Panc1 (cell line): ENCODE measurements at regions of chr17 and their contacts with region 1.

Region 1: DNA sequence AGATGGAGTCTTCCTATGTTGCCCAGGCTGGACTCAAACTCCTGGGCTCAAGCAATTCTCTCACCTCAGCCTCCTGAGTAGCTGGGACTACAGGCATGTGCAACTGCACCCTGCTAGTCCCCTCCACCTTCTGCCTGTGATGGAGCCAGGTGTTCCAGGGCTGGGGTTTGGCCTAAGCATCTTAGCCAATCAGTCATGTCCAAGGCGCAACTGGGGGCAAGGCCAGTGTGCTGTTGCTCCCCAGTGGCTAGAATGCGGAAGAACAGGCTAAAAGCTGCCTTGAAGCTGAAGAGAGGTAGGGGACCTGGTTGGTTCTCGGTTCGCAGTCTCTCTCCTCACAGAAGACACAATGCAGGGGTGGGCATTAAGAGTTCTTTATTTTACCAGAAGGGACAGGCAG is 18.6 kb downstream of the FLOT2 start:
- DNase-seq: no peak
- ATAC-seq: peak; percentile 86
- H3K4me3 ChIP-seq: no peak overlapping the region
- H3K27ac ChIP-seq: no peak overlapping the region
- H3K4me1 ChIP-seq: no peaks in the 10 kb centered on the region
- H3K27me3 ChIP-seq: no peaks in the 10 kb centered on the region
- CTCF ChIP-seq: no peak

Region 2: DNA sequence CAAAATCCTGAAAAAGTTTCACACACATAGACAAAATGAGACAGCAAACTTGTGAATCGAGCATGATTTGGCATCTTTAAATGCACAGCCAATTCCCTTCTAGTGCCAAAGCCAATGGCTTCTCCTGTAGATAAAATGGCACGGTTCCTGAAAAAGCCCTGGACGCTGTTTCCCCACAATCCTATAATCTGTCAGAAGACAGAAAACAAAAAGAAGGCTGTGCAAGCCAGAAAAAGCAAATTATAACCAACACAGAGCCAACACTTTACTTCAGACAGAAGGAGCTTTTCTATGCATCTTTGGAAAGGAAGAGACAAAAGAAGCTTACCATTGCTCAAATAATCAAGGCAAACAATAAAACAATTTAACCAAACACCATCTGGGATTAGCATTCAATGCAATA is 60.2 kb before region 1 on chr17:
- CTCF ChIA-PET with region 1: no interaction called
- POLR2A ChIA-PET with region 1: no interaction called
- in situ Hi-C with region 1: no loop called
- intact Hi-C with region 1: no loop called
- DNase-seq: no peak
- ATAC-seq: no peak
- H3K4me3 ChIP-seq: no peak overlapping the region
- H3K27ac ChIP-seq: no peak overlapping the region
- H3K4me1 ChIP-seq: peaks cover 5% of the 10 kb centered on the region; the same call in 1 of the 2 replicates
- H3K27me3 ChIP-seq: no peaks in the 10 kb centered on the region
- CTCF ChIP-seq: no peak

Region 3: GRCh38 chr17:28896884-28897768 is 18.1 kb after region 1 on chr17 and contains the start of gene FLOT2:
- CTCF ChIA-PET with region 1: interaction called, 5 read pairs
- POLR2A ChIA-PET with region 1: interaction called, 20 read pairs
- in situ Hi-C with region 1: no loop called
- intact Hi-C with region 1: no loop called
- DNase-seq: no peak
- ATAC-seq: peak; percentile 83
- H3K4me3 ChIP-seq: peak within 1 kb of the TSS; percentile 77 to 89
- H3K27ac ChIP-seq: peak within 1 kb of the TSS; percentile 83
- H3K4me1 ChIP-seq: peaks cover 18% of the 10 kb centered on the region
- H3K27me3 ChIP-seq: no peaks in the 10 kb centered on the region
- CTCF ChIP-seq: peak; percentile 54; the same call in 1 of the 2 replicates
- total RNA-seq, gene FLOT2: 110 TPM

Region 4: DNA sequence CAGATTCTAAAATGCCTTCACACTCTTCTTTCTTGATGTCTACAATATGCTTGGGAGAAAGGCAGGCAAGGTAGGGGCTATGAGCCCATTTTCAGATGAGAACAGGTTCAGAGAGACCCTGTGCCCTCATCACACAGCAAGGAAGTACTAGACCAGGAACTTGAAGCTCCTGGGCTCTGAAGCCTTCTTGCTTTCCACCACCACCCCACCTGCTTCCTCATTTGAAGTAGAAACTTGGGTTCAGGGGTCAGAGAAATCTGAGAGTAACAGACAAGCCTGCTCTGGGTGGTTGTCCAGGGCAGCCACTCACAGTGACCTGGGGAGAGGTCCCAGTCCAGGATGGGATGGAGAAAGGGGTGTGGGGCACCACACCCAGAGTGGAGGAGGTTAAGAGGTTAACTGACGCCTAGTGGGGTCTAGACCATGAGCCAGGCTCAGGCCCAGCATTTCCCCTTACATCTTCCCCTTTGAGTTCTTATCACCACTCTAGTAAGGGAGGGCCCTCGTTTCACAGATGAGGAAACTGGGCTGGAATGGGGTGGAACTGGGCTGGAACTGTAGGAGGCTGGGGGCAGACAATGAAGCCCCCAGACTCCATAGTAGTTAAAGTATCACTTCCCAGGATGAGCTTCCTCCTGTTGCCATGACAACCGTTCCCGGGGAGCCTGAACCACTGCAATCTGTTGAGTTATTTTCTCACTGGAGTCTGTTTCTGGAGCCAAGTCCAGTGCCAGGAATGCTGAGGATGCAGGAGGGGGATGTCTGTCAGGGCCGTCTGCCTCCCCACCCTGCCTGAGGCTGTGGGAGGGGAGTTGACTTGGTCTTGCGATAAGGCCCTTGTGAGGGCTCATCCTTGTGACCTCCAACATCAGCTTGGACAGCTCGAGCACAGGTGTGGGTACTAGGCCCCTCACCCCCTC is 88.5 kb after region 1 on chr17:
- CTCF ChIA-PET with region 1: no interaction called
- POLR2A ChIA-PET with region 1: no interaction called
- in situ Hi-C with region 1: no loop called
- intact Hi-C with region 1: no loop called
- DNase-seq: no peak
- ATAC-seq: no peak
- H3K4me3 ChIP-seq: no peak overlapping the region
- H3K27ac ChIP-seq: no peak overlapping the region
- H3K4me1 ChIP-seq: no peaks in the 10 kb centered on the region; the same call in 1 of the 2 replicates
- H3K27me3 ChIP-seq: peaks cover 3% of the 10 kb centered on the region; the same call in 1 of the 2 replicates
- CTCF ChIP-seq: no peak